CD8-positive, alpha-beta memory T cell (primary cell): ENCODE measurements at regions of chr1 and their contacts with region 1.

Region 1: GRCh38 chr1:25232027-25232865 is at the start of gene SYF2:
- DNase-seq: peak; percentile 82 to 95 (median 91)
- H3K4me3 ChIP-seq: peak within 1 kb of the TSS; percentile 88
- H3K4me3 Mint-ChIP-seq: no peak within 1 kb of the TSS
- H3K27ac ChIP-seq: peak within 1 kb of the TSS; percentile 97
- H3K27ac Mint-ChIP-seq: no peak within 1 kb of the TSS
- H3K4me1 ChIP-seq: peaks cover 23% of the 10 kb centered on the region
- H3K4me1 Mint-ChIP-seq: peaks cover 31 to 46% (median 37%) of the 10 kb centered on the region in 3 donors
- H3K27me3 ChIP-seq: no peaks in the 10 kb centered on the region
- H3K27me3 Mint-ChIP-seq: no peaks in the 10 kb centered on the region
- total RNA-seq, gene SYF2: 38.4 to 40.4 TPM

Region 2: GRCh38 chr1:25128121-25128621 is 104.1 kb before region 1 on chr1:
- CTCF ChIA-PET with region 1: no interaction called
- POLR2A ChIA-PET with region 1: no interaction called
- DNase-seq: no peak
- H3K4me3 ChIP-seq: no peak overlapping the region
- H3K4me3 Mint-ChIP-seq: no peak overlapping the region
- H3K27ac ChIP-seq: no peak overlapping the region
- H3K27ac Mint-ChIP-seq: peak overlapping the region in 1 of 8 donors; percentile 33
- H3K4me1 ChIP-seq: no peaks in the 10 kb centered on the region
- H3K4me1 Mint-ChIP-seq: peaks cover 0 to 8% (median 0%) of the 10 kb centered on the region in 3 donors
- H3K27me3 ChIP-seq: no peaks in the 10 kb centered on the region
- H3K27me3 Mint-ChIP-seq: peaks cover 4 to 9% of the 10 kb centered on the region in 2 donors

Region 3: GRCh38 chr1:25247024-25247828 is 15.0 kb after region 1 on chr1 and contains the start of gene RSRP1:
- CTCF ChIA-PET with region 1: interaction called, 11 read pairs
- POLR2A ChIA-PET with region 1: interaction called, 114 read pairs
- DNase-seq: peak; percentile 99 to 100 (median 100)
- H3K4me3 ChIP-seq: peak within 1 kb of the TSS; percentile 99
- H3K4me3 Mint-ChIP-seq: peak within 1 kb of the TSS; percentile 94 to 100 (median 99)
- H3K27ac ChIP-seq: peak within 1 kb of the TSS; percentile 99
- H3K27ac Mint-ChIP-seq: peak within 1 kb of the TSS; percentile 98 to 100 (median 99)
- H3K4me1 ChIP-seq: peaks cover 44% of the 10 kb centered on the region
- H3K4me1 Mint-ChIP-seq: peaks cover 42 to 56% (median 54%) of the 10 kb centered on the region in 3 donors
- H3K27me3 ChIP-seq: no peaks in the 10 kb centered on the region
- H3K27me3 Mint-ChIP-seq: peaks cover 0 to 12% of the 10 kb centered on the region in 2 donors
- total RNA-seq, gene RSRP1: 116 to 124 TPM

Region 4: DNA sequence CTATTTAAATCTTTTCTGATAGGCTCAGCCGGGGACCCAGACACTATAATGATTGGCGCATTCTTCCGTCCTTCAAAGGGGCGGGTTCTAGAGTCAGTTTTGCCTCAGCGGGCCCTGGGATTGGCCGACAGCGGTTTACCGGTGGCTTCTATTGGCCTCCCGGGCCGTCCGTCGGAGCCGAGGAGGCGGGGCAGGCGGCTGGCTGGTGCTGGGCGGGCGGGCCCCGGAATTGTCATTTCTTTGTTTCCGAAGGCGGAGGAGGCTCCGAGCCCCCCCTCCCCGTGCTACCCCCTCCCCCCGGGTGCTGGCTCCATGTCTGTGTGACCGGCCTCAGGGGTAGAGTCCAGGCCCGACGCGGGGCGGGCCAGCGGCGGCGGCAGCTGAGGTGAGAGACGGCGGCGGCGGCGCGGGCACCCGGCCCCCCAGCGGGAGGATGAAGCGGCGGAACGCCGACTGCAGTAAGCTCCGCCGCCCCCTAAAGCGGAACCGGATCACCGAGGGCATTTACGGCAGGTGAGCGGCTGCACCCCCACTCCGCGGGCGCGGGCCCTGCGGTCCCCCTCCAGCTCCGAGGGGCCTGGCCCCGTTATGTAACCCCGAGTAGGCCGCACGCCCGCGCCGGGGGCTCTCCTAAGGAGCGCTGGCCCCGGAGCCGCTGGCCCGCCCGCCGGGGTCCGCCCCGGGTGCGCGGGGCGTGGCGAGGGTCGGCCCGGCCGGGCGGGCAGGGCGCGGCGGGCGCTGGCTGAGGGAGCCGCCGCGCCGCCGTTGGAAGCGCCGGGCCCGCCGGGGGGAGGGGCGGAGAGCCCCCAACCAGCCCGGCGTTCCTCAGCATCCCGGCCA is 198.6 kb after region 1 on chr1 and contains the start of gene MACO1:
- CTCF ChIA-PET with region 1: no interaction called
- POLR2A ChIA-PET with region 1: interaction called, 19 read pairs
- DNase-seq: peak; percentile 95 to 98 (median 96)
- H3K4me3 ChIP-seq: peak within 1 kb of the TSS; percentile 81
- H3K4me3 Mint-ChIP-seq: peak within 1 kb of the TSS; percentile 96 to 99 (median 97)
- H3K27ac ChIP-seq: peak within 1 kb of the TSS; percentile 98
- H3K27ac Mint-ChIP-seq: peak within 1 kb of the TSS; percentile 99 to 100 (median 100)
- H3K4me1 ChIP-seq: peaks cover 42% of the 10 kb centered on the region
- H3K4me1 Mint-ChIP-seq: peaks cover 49 to 57% (median 49%) of the 10 kb centered on the region in 3 donors
- H3K27me3 ChIP-seq: no peaks in the 10 kb centered on the region
- H3K27me3 Mint-ChIP-seq: no peaks in the 10 kb centered on the region
- total RNA-seq, gene MACO1: 14.7 to 15.6 TPM